ENCODE measurements at regions of chrX and their contacts with region 1.

Region 1: DNA sequence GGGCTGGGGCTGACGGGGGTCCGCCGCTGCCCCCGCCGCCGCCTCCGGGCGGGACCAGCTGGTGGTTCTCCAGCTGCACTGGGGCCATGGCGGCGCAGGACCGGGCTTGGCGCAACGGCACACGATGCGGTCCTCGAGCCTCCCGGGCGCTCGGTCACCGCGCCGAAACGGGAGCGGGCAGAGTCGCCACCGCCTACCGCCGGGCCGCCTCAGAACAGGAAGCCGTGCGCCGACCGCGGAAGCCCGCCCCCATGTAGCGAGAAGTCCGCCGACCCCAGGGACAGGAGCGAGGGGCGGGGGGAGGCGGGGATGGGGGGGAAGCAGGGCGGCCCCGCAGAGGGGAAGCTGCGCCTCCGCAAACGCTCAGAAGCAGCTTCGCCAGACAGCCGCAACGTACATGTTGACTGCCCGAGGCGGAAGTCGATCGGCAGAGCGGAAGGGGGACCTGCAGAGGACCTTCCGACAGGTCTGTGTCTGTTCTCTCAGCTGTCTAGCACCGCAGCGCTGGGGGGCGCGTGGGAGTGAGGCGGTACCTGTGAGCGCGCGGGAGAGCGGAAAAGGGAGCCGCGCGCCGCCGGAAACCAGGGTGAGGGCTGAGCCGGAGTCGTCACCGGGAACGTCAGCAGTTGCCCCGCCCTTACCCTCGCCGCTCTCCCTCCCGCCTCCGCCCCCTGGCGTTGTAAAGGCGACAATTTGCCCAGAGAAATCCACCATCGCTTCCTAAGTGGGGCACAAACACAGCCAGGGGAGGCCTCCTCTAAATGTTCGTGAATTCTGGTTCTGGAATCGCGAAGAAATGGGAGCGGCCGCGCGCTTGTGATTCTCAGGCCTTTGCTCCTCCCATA is at the start of gene MED14:
- DNase-seq: peak; percentile 62 to 73
- H3K4me3 ChIP-seq: peak within 1 kb of the TSS; percentile 58
- H3K27ac ChIP-seq: peak within 1 kb of the TSS; percentile 74
- H3K4me1 ChIP-seq: no peaks in the 10 kb centered on the region; the same call in 1 of the 2 replicates
- H3K27me3 ChIP-seq: no peaks in the 10 kb centered on the region
- CTCF ChIP-seq: peak; percentile 45; the same call in 1 of the 2 replicates
- total RNA-seq, gene MED14: 39.9 and 47.0 TPM in 2 replicates

Region 2: GRCh38 chrX:40792433-40792832 is 56.9 kb after region 1 on chrX:
- CTCF ChIA-PET with region 1: no interaction called
- POLR2A ChIA-PET with region 1: no interaction called
- intact Hi-C with region 1: loop called (anchors 5 kb)
- DNase-seq: no peak
- H3K4me3 ChIP-seq: no peak overlapping the region
- H3K27ac ChIP-seq: no peak overlapping the region
- H3K4me1 ChIP-seq: peaks cover 5% of the 10 kb centered on the region; the same call in 1 of the 2 replicates
- H3K27me3 ChIP-seq: no peaks in the 10 kb centered on the region
- CTCF ChIP-seq: no peak

Region 3: GRCh38 chrX:40897718-40898270 is 162.2 kb after region 1 on chrX:
- CTCF ChIA-PET with region 1: no interaction called
- POLR2A ChIA-PET with region 1: no interaction called
- intact Hi-C with region 1: no loop called
- DNase-seq: no peak
- H3K4me3 ChIP-seq: no peak overlapping the region
- H3K27ac ChIP-seq: no peak overlapping the region
- H3K4me1 ChIP-seq: no peaks in the 10 kb centered on the region
- H3K27me3 ChIP-seq: no peaks in the 10 kb centered on the region
- CTCF ChIP-seq: no peak

Region 4: GRCh38 chrX:40908857-40909475 is 173.4 kb after region 1 on chrX:
- CTCF ChIA-PET with region 1: no interaction called
- POLR2A ChIA-PET with region 1: no interaction called
- intact Hi-C with region 1: loop called (anchors 2 kb)
- DNase-seq: peak in 1 of 2 experiments; percentile 65
- H3K4me3 ChIP-seq: no peak overlapping the region
- H3K27ac ChIP-seq: peak overlapping the region; percentile 89
- H3K4me1 ChIP-seq: peaks cover 33% of the 10 kb centered on the region
- H3K27me3 ChIP-seq: no peaks in the 10 kb centered on the region
- CTCF ChIP-seq: no peak

Region 5: GRCh38 chrX:40987413-40987812 is 251.9 kb after region 1 on chrX:
- CTCF ChIA-PET with region 1: no interaction called
- POLR2A ChIA-PET with region 1: no interaction called
- intact Hi-C with region 1: no loop called
- DNase-seq: no peak
- H3K4me3 ChIP-seq: no peak overlapping the region
- H3K27ac ChIP-seq: no peak overlapping the region
- H3K4me1 ChIP-seq: no peaks in the 10 kb centered on the region
- H3K27me3 ChIP-seq: no peaks in the 10 kb centered on the region
- CTCF ChIP-seq: no peak

Measured in PC-9 (cell line).